Heart left ventricle (tissue), 16 donors: ENCODE measurements at regions of chr5 and their contacts with region 1.

Region 1: DNA sequence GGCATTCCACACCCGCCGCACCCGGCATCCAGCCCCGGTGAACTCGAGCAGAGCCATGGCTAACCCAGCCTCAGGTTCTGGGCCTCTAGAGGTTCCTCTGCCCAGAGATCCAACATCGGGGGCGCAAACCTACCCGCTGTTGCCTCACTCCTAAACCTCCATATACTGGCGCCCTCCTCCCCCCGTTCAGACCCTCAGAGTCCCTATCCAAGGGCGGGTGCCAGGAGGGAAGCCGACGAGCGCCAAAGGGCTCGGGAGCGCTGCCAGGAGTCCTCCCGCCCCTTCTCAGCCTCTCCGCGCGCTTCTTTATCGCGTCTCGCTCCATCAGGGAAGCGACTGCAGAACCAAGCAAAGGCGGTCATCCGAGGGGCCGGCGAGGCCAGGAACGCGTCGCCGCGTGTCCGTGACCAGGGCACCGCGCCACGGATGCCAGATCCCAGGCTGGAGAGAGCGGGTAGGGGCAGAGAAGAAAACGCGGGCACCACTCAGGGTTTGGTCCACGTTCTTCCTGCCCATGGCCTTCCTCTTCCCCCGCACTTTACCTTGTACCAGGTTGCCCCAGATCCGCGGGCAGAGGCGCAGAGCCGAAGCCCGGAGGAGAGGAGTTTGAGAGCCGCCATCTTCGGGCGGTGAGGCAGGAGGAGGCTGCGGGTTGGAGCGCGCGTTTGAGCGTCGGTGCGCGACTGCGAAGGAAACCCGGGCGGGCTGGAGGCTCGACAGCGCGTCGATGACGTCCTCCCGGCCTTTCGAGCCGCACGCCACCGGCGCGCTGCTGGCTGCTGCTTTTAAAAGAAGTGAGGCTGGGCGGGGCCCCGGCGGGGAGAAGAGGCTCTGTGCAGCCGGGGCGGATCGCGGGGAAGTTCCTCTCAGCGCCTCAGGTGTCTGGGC is at the start of gene OXCT1:
- DNase-seq: peak; percentile 78 to 92 (median 85)
- ATAC-seq: peak; percentile 64 to 88 (median 84)
- H3K4me3 ChIP-seq: peak within 1 kb of the TSS; percentile 64 to 91 (median 78)
- H3K27ac ChIP-seq: peak within 1 kb of the TSS; percentile 84 to 96 (median 92)
- H3K4me1 ChIP-seq: peaks cover 0 to 35% (median 18%) of the 10 kb centered on the region in 12 donors
- H3K27me3 ChIP-seq: no peaks in the 10 kb centered on the region
- CTCF ChIP-seq: no peak
- POLR2A ChIP-seq: peak in 1 of 2 donors; percentile 67
- total RNA-seq, gene OXCT1: 73.4 to 363 (median 205) TPM

Region 2: GRCh38 chr5:41903892-41904799 is 34.2 kb after region 1 on chr5 and contains the start of gene RIMOC1:
- intact Hi-C with region 1: loop called in 9 of 10 experiments (anchors 1 to 5 kb)
- DNase-seq: peak; percentile 99
- ATAC-seq: peak; percentile 99
- H3K4me3 ChIP-seq: peak within 1 kb of the TSS; percentile 45 to 90 (median 77)
- H3K27ac ChIP-seq: peak within 1 kb of the TSS; percentile 76 to 92 (median 88)
- H3K4me1 ChIP-seq: peaks cover 3 to 47% (median 26%) of the 10 kb centered on the region in 12 donors
- H3K27me3 ChIP-seq: no peaks in the 10 kb centered on the region
- CTCF ChIP-seq: no peak
- POLR2A ChIP-seq: peak in 1 of 2 donors; percentile 63
- total RNA-seq, gene RIMOC1: 7.6 to 24.0 (median 17.7) TPM

Region 3: DNA sequence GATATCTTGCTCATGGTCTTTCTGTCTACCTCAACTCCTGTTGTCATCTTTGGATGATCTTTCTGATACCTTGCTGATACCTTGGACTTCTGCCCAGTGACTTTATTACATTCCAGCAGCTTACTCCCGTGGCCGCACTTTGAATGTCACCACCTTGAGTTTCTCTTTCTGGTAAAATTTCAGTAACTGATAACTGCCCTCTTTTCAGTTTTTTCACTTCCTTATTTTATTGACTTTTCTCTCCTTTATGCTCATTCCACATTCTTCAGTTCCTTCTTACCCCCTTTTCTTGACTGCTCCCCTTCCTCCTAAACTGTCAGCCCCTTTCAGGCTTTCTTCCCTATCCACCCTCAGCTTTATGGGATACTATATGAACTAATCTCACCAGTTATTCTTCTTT is 48.1 kb after region 1 on chr5:
- intact Hi-C with region 1: loop called in 2 of 10 experiments (anchors 5 kb)
- DNase-seq: no peak
- ATAC-seq: no peak
- H3K4me3 ChIP-seq: no peak overlapping the region
- H3K27ac ChIP-seq: no peak overlapping the region
- H3K4me1 ChIP-seq: peaks cover 0 to 9% (median 3%) of the 10 kb centered on the region in 12 donors
- H3K27me3 ChIP-seq: no peaks in the 10 kb centered on the region
- CTCF ChIP-seq: no peak
- POLR2A ChIP-seq: no peak